ENCODE measurements at regions of chr15 and their contacts with region 1.

Region 1: DNA sequence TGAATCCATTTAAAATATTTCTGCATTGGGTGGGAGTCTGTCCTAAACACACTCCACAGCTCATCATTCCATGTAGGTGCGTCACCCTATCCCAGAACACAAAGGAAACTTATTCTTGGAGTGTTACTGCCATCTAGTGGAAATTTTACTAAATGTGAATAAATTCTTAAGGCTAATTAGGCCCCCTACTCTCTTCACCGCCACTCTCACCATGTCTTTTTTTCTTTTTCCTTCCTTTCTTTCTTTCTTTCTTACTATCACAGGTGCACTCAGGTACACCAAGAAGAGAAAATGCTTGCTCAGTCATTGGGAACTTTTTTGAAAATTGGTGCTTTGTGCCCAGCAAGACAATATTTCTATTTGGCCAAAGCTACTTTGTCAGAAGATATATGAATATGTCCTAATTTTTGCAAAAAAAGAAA is 26.4 kb upstream of the ATP8B4 start:
- DNase-seq: no peak
- H3K4me3 ChIP-seq: no peak overlapping the region
- H3K27ac ChIP-seq: no peak overlapping the region
- H3K4me1 ChIP-seq: no peaks in the 10 kb centered on the region
- H3K27me3 ChIP-seq: no peaks in the 10 kb centered on the region
- CTCF ChIP-seq: peak; percentile 37

Region 2: DNA sequence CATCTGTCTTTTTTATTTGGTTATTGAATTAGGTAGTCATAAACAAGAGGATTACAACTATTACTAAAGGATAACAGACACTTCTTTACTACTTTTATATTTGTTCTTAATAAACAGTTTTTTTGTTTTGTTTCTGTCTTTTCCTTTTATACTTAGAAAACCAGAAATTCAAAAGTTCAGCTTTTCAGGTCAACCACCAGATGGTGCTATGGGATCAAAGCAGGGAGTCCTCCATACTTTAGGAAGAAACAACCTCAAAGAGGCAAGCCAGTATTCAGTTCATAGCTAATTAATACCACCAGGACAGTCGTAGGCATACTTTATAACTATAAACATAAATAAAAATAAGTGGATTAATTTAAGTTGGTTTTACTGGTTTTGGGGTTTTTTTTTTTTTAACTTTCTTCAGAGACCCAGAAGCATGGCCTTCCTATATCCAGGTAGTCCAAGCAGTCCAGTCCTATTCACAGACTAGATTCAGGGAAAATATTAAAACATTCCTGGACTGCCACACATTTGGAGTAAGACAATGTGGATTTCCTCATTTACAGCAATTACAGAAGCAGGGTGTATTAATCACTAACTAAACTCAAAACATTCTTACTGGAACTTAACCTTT is 1283.5 kb before region 1 on chr15:
- intact Hi-C with region 1: loop called (anchors 5 kb)
- DNase-seq: peak; percentile 40
- H3K4me3 ChIP-seq: no peak overlapping the region
- H3K27ac ChIP-seq: no peak overlapping the region
- H3K4me1 ChIP-seq: no peaks in the 10 kb centered on the region
- H3K27me3 ChIP-seq: no peaks in the 10 kb centered on the region
- CTCF ChIP-seq: peak; percentile 83

Region 3: GRCh38 chr15:49235446-49236124 is 909.9 kb before region 1 on chr15:
- intact Hi-C with region 1: loop called (anchors 10 kb)
- DNase-seq: peak; percentile 51
- H3K4me3 ChIP-seq: no peak overlapping the region
- H3K27ac ChIP-seq: no peak overlapping the region
- H3K4me1 ChIP-seq: no peaks in the 10 kb centered on the region
- H3K27me3 ChIP-seq: no peaks in the 10 kb centered on the region
- CTCF ChIP-seq: peak; percentile 57

Region 4: GRCh38 chr15:49421991-49422390 is 723.5 kb before region 1 on chr15:
- intact Hi-C with region 1: loop called (anchors 10 kb)
- DNase-seq: peak; percentile 41
- H3K4me3 ChIP-seq: no peak overlapping the region
- H3K27ac ChIP-seq: no peak overlapping the region
- H3K4me1 ChIP-seq: no peaks in the 10 kb centered on the region
- H3K27me3 ChIP-seq: no peaks in the 10 kb centered on the region
- CTCF ChIP-seq: peak; percentile 66

Region 5: DNA sequence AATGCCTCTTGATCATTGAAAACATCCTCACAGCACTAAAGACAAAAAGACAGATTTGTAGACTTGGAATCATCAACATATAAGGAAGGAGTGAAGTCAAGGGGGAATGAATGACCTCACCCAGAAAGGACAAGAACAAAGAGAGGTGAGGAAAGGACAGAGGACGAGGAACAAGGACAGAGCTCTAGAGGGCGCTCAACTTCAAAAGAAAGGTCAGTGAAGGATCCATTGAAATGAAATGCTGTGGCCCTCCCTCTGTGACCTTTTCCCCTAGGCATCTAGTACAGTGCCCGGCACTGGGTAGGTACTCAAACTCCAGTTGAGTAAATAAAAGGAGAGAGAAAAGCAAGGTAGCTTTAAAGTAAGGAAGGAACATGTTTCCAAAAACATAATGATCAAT is 29.0 kb before region 1 on chr15:
- intact Hi-C with region 1: no loop called
- DNase-seq: peak; percentile 31
- H3K4me3 ChIP-seq: no peak overlapping the region
- H3K27ac ChIP-seq: no peak overlapping the region
- H3K4me1 ChIP-seq: no peaks in the 10 kb centered on the region
- H3K27me3 ChIP-seq: no peaks in the 10 kb centered on the region
- CTCF ChIP-seq: peak; percentile 18

Region 6: DNA sequence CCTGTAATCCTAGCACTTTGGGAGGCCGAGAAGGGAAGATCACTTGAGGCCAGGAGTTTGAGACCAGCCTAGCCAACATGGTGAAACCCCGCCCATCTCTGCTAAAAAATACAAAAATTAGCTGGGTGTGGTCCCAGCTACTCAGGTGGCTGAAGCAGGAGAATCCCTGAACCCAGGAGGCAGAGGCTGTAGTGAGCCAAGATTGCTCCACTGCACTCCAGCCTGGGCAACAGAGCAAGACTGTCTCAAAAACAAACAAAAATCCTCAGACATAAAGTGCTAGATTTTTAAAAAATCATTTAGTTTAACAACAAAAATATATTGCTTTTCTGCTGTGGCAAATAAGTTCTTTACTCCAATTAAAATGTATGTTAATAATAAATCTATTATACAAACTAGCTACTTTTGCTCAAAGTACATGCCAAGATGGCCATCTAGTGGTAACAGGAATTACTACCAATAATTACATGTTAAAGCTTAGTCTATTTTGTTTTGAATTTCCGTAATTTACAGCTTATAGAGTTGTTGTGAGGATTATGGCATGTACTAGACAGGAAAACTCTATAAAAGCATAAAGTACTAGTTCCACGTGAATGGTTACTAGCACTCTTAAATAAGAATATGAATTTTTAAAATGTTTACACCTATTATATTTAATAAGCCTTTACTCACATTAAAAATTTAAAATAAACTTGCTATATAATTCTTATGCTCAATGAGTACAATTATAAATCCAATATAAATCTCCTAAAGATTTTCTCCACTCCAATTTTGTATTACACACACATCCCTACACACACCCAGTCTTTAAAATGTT is 170.6 kb after region 1 on chr15:
- intact Hi-C with region 1: loop called (anchors 10 kb)
- DNase-seq: no peak
- H3K4me3 ChIP-seq: no peak overlapping the region
- H3K27ac ChIP-seq: no peak overlapping the region
- H3K4me1 ChIP-seq: no peaks in the 10 kb centered on the region
- H3K27me3 ChIP-seq: no peaks in the 10 kb centered on the region
- CTCF ChIP-seq: peak; percentile 54

Measured in colonic mucosa (tissue), 4 donors.